Activated CD4-positive, alpha-beta T cell treated with anti-CD3 and anti-CD28 coated beads, Interleukin-2, amount 10 ng/mL, durations not matched to agents 24 days and 14 days (primary cell): ENCODE measurements at regions of chr9 and their contacts with region 1.

Region 1: DNA sequence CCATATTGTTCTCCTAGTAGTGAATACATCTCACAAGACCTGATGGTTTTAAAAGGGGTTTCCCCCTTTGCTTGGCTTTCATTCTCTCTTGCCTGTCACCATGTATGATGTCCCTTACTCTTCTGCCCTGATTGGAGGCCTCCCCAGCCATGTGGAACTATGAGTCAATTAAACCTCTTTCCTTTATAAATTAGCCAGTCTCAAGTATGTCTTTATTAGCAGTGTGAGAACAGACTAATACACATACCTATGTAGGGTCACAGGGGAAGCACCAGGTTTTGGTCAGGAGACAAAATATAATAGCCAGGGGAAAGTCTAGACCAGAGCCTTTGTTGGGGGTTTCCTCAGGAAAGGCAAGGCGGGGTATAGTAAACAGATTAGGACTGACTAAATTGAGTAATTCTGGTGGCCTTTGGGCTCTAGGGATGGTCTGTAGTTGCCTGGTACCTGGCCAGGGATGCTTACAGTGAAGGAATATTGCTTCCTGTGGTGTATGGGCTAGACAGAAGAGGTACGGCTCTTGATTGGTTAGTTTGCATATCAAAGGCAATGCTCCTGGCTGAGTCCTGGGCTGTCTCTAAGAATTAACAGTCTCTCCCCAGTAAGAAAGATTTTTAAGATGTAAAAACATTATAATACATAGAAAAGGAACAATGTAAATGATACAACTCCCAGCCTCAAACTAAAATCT is 254.5 kb downstream of the ELAVL2 start:
- DNase-seq: no peak
- H3K4me3 Mint-ChIP-seq: no peak overlapping the region
- H3K27ac Mint-ChIP-seq: no peak overlapping the region
- H3K4me1 Mint-ChIP-seq: no peaks in the 10 kb centered on the region
- H3K27me3 Mint-ChIP-seq: no peaks in the 10 kb centered on the region

Region 2: DNA sequence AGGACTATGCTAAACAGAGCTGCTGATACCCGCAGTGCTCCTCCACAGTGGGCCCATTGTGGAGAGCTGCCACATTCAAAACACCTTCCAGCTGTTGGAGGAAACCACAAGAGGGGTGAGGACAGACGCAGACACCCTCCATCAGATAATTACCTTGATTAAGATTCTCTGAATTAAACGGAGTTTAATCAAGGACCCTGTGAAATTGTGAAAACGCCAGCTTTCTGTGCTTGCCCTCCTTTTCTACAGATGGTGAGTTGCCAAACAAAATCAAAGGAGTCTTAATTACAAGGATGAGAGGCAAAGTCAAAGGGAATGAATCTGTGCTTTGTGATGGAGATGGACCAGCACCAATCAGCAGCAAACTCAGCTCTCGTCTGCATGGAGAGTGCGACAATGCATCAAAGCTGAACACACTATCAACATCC is 341.7 kb before region 1 on chr9:
- intact Hi-C with region 1: no loop called
- DNase-seq: no peak
- H3K4me3 Mint-ChIP-seq: no peak overlapping the region
- H3K27ac Mint-ChIP-seq: no peak overlapping the region
- H3K4me1 Mint-ChIP-seq: no peaks in the 10 kb centered on the region
- H3K27me3 Mint-ChIP-seq: no peaks in the 10 kb centered on the region

Region 3: DNA sequence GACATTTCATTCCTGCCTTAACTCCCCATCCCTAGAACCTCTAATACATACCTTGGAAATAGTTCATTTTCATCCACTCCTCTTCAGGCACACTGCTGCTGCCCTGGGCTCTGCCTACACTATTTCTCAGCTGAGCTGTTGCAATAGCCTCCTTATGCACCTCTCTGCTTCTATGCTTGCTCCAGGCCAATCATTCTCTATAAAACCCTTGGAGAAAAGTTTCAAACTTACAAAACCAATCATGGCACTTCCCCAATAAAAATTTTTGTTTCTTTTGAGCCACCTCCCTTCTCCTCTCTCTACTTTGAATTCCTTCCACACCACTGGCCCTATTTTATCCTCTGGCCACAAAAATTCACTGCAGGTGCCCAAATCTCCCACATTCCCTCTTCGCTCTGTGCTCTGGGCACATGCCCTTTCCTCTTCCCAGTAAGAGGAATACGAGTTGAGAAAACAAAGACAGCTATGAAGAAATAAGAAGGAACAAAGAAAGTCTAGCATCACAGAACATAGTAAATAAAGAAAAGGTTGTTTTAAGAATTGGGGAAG is 46.9 kb before region 1 on chr9:
- intact Hi-C with region 1: loop called (anchors 10 kb)
- DNase-seq: no peak
- H3K4me3 Mint-ChIP-seq: no peak overlapping the region
- H3K27ac Mint-ChIP-seq: no peak overlapping the region
- H3K4me1 Mint-ChIP-seq: no peaks in the 10 kb centered on the region
- H3K27me3 Mint-ChIP-seq: no peaks in the 10 kb centered on the region

Region 4: DNA sequence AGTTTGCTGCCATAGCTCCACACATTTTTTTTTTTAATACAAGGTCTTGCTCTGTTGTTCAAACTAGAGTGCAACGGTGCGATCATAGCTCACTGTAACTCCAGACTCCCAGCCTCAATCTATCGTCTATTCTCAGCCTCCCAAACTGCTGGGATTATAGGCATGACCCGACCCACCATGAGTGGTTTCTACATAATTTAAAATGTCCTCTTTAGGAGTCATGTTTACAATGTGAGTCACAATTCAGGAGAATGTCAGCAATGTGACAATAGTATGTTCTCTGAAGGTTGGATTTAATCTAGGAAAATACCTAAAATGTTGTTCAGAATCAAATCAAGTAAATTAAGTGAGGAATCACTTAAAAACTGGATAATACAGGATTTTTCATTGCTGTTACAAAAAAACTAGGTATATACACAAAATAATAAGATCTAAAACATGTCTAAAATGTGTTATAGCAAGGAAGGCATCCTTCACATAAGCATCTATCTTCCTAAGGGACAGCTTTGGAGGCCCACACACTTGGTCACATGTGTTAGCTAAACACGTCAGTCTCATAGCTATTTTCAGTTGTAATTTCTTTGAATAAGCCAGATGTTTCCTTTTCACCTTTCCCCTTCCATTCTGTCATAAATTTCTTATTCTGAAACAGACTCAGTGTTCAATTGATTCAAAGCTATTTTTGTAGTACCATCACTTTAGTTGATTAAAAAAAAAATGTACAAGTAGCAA is 284.5 kb after region 1 on chr9:
- intact Hi-C with region 1: no loop called
- DNase-seq: no peak
- H3K4me3 Mint-ChIP-seq: no peak overlapping the region
- H3K27ac Mint-ChIP-seq: no peak overlapping the region
- H3K4me1 Mint-ChIP-seq: no peaks in the 10 kb centered on the region
- H3K27me3 Mint-ChIP-seq: peaks cover 4% of the 10 kb centered on the region